BJ (cell line): ENCODE measurements at regions of chr7 and their contacts with region 1.

Region 1: GRCh38 chr7:148849393-148850098 is 34.5 kb downstream of the EZH2 start:
- DNase-seq: no peak
- H3K4me3 ChIP-seq: no peak overlapping the region
- H3K27me3 ChIP-seq: no peaks in the 10 kb centered on the region
- CTCF ChIP-seq: no peak

Region 2: GRCh38 chr7:148813890-148814289 is 35.7 kb before region 1 on chr7:
- CTCF ChIA-PET with region 1: no interaction called
- POLR2A ChIA-PET with region 1: interaction called, 13 read pairs
- DNase-seq: no peak
- H3K4me3 ChIP-seq: no peak overlapping the region
- H3K27me3 ChIP-seq: no peaks in the 10 kb centered on the region
- CTCF ChIP-seq: no peak